ENCODE measurements at regions of chr11 and their contacts with region 1.

Region 1: GRCh38 chr11:95222817-95223216 is 8.2 kb downstream of the SESN3 start:
- DNase-seq: peak in 1 of 9 donors; percentile 16
- ATAC-seq: peak; percentile 49
- H3K4me3 ChIP-seq: no peak overlapping the region
- H3K4me3 Mint-ChIP-seq: peak overlapping the region in 2 of 10 donors; percentile 8 to 10
- H3K27ac ChIP-seq: no peak overlapping the region
- H3K27ac Mint-ChIP-seq: peak overlapping the region in 2 of 9 donors; percentile 36 to 39
- H3K4me1 ChIP-seq: peaks cover 0 to 3% of the 10 kb centered on the region in 2 donors
- H3K4me1 Mint-ChIP-seq: peaks cover 23 to 73% (median 66%) of the 10 kb centered on the region in 7 donors
- H3K27me3 ChIP-seq: no peaks in the 10 kb centered on the region
- H3K27me3 Mint-ChIP-seq: no peaks in the 10 kb centered on the region

Region 2: DNA sequence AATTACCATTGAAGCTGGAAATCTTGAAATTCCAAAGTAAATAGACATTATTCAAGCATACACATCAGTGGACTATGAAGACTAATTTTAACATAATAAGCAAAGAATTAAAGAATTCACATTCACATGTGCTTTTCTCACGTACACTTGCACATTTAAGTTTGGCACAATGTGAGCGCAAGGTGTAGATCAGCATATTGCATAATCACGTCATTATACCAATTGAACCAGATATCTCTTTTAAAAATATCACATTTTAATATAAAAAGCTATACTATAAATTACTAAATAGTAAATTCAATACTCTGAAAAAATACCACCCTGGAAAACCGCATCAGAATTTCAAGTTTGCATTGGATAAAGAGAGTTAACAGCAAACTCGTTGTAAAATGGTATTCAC is 52.5 kb before region 1 on chr11:
- CTCF ChIA-PET with region 1: no interaction called
- POLR2A ChIA-PET with region 1: no interaction called
- intact Hi-C with region 1: loop called in 1 of 2 experiments (anchors 5 kb)
- DNase-seq: no peak
- ATAC-seq: no peak
- H3K4me3 ChIP-seq: no peak overlapping the region
- H3K4me3 Mint-ChIP-seq: no peak overlapping the region
- H3K27ac ChIP-seq: no peak overlapping the region
- H3K27ac Mint-ChIP-seq: no peak overlapping the region
- H3K4me1 ChIP-seq: no peaks in the 10 kb centered on the region
- H3K4me1 Mint-ChIP-seq: peaks cover 0 to 5% (median 0%) of the 10 kb centered on the region in 7 donors
- H3K27me3 ChIP-seq: no peaks in the 10 kb centered on the region
- H3K27me3 Mint-ChIP-seq: no peaks in the 10 kb centered on the region

Region 3: DNA sequence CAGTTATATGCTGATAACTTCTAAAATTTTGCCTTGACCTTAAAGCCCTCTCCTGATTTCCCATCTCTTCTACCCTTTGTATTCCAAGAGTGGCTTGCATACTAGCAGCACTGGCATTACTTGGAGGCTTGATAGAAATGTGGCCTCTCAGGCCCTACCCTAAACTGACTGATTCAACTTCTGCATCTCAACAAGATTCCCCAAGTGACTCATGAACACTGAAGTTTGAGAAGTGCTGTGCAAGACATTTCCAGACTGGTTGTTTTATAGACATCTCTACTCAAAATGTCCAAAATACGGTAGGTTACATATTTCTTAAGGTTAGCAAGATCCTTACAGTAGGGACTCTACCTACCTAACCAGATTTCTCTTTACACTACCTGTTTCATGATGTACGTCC is 40.4 kb before region 1 on chr11:
- CTCF ChIA-PET with region 1: no interaction called
- POLR2A ChIA-PET with region 1: no interaction called
- intact Hi-C with region 1: no loop called
- DNase-seq: no peak
- ATAC-seq: no peak
- H3K4me3 ChIP-seq: no peak overlapping the region
- H3K4me3 Mint-ChIP-seq: no peak overlapping the region
- H3K27ac ChIP-seq: no peak overlapping the region
- H3K27ac Mint-ChIP-seq: peak overlapping the region in 6 of 9 donors; percentile 13 to 70 (median 42)
- H3K4me1 ChIP-seq: no peaks in the 10 kb centered on the region
- H3K4me1 Mint-ChIP-seq: peaks cover 4 to 30% (median 13%) of the 10 kb centered on the region in 7 donors
- H3K27me3 ChIP-seq: no peaks in the 10 kb centered on the region
- H3K27me3 Mint-ChIP-seq: no peaks in the 10 kb centered on the region

Measured in naive thymus-derived CD4-positive, alpha-beta T cell (primary cell).